Heart right ventricle (tissue), 16 donors: ENCODE measurements at regions of chr16 and their contacts with region 1.

Region 1: DNA sequence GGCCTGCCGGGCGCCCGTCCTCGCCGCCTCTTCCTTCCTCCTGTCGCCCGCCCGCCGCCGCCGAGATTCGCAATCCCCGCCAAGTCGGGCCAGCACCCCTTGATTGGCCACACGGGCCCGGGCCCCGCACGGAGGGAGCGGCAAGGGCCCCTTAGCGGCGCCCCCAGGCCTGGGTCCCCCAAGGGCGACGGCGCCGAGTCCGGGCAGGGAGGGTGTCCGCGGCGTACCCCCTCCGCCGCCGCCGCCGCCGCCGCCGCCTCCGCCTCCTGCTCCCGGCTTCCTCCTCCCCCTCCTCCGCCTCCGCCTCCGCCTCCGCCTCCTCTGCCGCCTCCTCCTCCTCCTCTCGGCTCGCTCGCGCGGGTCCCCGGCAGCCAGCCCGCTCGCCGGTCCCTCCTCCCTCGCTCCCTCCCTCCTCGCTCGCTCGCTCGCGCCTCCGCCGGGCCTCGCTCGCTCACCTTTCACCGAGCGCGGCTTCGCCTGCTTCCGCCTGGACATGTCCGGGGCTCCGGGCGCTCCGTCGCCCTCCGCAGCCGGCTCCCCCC is 561 bp downstream of the ZNF423 start:
- DNase-seq: peak; percentile 90 to 92
- ATAC-seq: peak; percentile 56 to 83 (median 72)
- H3K4me3 ChIP-seq: peak overlapping the region; percentile 40 to 84 (median 70)
- H3K27ac ChIP-seq: peak overlapping the region; percentile 85 to 99 (median 93)
- H3K4me1 ChIP-seq: peaks cover 0 to 64% (median 51%) of the 10 kb centered on the region in 9 donors
- H3K27me3 ChIP-seq: peaks cover 0 to 64% (median 0%) of the 10 kb centered on the region in 7 donors
- CTCF ChIP-seq: no peak

Region 2: GRCh38 chr16:49608779-49609178 is 246.6 kb before region 1 on chr16:
- intact Hi-C with region 1: loop called in 7 of 10 experiments (anchors 5 to 10 kb)
- DNase-seq: peak in 1 of 2 donors; percentile 41
- ATAC-seq: peak; percentile 42 to 94 (median 86)
- H3K4me3 ChIP-seq: no peak overlapping the region
- H3K27ac ChIP-seq: no peak overlapping the region
- H3K4me1 ChIP-seq: peaks cover 0 to 6% (median 0%) of the 10 kb centered on the region in 9 donors
- H3K27me3 ChIP-seq: no peaks in the 10 kb centered on the region
- CTCF ChIP-seq: peak in 8 of 9 donors; percentile 41 to 72 (median 62)

Region 3: DNA sequence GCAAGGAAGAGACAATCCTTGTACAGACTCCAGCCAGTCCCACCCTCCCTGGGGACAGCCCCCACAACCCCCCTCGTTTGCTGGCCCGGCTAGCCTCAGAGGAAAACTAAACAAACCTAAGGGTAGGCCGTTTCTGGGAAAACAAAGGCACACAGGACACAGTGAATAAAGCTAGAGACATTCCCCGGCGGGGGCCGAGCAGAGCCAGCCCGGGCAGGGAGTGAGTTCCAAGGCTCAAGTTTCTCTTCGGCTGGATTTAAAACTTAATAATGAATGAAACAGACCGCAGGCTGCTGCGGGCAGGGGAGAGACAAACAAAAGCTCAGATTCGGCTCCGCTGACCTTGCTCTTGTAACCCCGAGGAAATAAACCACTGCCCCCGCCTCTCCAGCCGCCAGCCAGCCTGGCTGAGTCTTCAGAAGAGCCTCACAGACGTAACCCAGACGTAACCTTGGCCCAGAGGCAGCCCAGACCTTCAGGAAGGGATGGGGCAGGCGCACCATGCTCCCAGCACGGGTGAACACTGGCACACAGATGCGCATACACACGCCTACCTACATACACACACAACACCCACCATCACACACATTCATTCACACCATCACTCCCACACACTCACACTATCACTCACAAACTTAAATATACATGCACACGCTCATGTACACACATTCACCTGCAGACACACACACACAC is 215.5 kb before region 1 on chr16:
- intact Hi-C with region 1: loop called in 1 of 10 experiments (anchors 10 kb)
- DNase-seq: peak; percentile 75 to 76
- ATAC-seq: peak; percentile 52 to 85 (median 76)
- H3K4me3 ChIP-seq: peak overlapping the region in 2 of 10 donors; percentile 0 to 14
- H3K27ac ChIP-seq: peak overlapping the region in 9 of 10 donors; percentile 39 to 79 (median 66)
- H3K4me1 ChIP-seq: peaks cover 11 to 55% (median 40%) of the 10 kb centered on the region in 9 donors
- H3K27me3 ChIP-seq: no peaks in the 10 kb centered on the region
- CTCF ChIP-seq: no peak

Region 4: DNA sequence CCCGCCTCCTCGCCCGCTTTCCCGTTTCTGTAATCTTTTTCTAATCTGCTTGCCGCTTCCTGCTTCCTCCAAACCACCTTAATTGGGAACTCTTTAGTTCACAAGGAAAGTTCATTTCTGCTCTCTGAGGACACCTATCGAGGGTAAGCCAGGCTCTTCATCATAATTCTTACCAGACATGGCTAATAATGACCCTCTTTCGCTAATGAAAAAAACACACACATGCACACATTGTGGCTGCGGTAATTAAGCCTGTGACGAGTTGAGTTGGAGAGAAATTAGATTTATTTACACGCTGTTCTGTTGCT is 100.1 kb before region 1 on chr16:
- intact Hi-C with region 1: loop called in 5 of 10 experiments (anchors 2 to 10 kb)
- DNase-seq: peak in 1 of 2 donors; percentile 30
- ATAC-seq: peak; percentile 51 to 89 (median 77)
- H3K4me3 ChIP-seq: peak overlapping the region in 9 of 10 donors; percentile 30 to 56 (median 44)
- H3K27ac ChIP-seq: peak overlapping the region; percentile 43 to 90 (median 84)
- H3K4me1 ChIP-seq: peaks cover 2 to 51% (median 40%) of the 10 kb centered on the region in 9 donors
- H3K27me3 ChIP-seq: peaks cover 0 to 13% (median 0%) of the 10 kb centered on the region in 7 donors
- CTCF ChIP-seq: peak; percentile 20 to 74 (median 51)

Region 5: DNA sequence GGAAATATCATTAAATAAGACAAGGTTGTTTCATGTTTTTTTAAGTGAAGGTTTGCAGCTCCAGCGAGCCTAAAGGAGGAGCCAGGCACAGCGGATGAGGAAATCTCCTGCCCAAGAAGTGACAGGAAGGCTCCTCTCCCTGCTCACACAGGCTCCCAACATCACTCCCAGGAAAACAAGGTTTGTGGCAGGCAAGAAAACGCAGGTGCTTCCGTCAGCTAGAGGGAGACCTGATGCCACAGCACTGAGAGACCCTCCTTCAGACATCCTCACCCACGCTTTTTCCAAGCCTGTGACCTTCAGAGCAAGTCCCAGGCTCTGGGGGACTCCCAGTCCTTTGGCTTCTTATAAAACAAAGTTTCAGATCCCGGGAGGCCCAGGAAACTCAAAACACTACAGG is 89.1 kb before region 1 on chr16:
- intact Hi-C with region 1: no loop called
- DNase-seq: no peak
- ATAC-seq: peak in 4 of 8 donors; percentile 24 to 42 (median 36)
- H3K4me3 ChIP-seq: no peak overlapping the region
- H3K27ac ChIP-seq: peak overlapping the region in 3 of 10 donors; percentile 19 to 72 (median 56)
- H3K4me1 ChIP-seq: peaks cover 0 to 15% (median 10%) of the 10 kb centered on the region in 9 donors
- H3K27me3 ChIP-seq: no peaks in the 10 kb centered on the region
- CTCF ChIP-seq: no peak

Region 6: DNA sequence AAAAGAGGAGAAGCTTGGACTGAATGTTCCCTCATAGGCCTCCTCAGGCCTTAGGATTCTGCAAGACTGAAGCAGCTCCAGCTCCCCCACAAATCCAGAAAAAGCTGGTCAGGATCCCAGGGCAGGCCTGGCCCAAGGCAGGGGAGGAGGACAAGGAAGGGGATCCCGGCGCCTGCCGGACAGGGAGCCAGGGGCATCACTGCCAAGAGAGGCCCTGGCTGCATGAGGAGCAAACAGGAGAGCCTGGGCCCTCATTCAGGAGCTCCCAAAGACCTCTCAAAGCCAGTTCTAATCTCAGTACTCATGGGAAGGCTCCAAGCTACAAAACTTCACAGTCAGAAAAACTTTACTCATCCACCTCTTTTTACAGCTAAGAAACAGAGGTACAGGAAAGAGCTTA is 66.8 kb before region 1 on chr16:
- intact Hi-C with region 1: no loop called
- DNase-seq: peak in 1 of 2 donors; percentile 33
- ATAC-seq: peak in 6 of 8 donors; percentile 19 to 74 (median 60)
- H3K4me3 ChIP-seq: no peak overlapping the region
- H3K27ac ChIP-seq: peak overlapping the region in 7 of 10 donors; percentile 14 to 56 (median 20)
- H3K4me1 ChIP-seq: peaks cover 0 to 33% (median 4%) of the 10 kb centered on the region in 9 donors
- H3K27me3 ChIP-seq: no peaks in the 10 kb centered on the region
- CTCF ChIP-seq: no peak

Region 7: GRCh38 chr16:49821614-49822282 is 33.6 kb before region 1 on chr16:
- intact Hi-C with region 1: no loop called
- DNase-seq: no peak
- ATAC-seq: no peak
- H3K4me3 ChIP-seq: no peak overlapping the region
- H3K27ac ChIP-seq: no peak overlapping the region
- H3K4me1 ChIP-seq: peaks cover 8 to 49% (median 25%) of the 10 kb centered on the region in 9 donors
- H3K27me3 ChIP-seq: no peaks in the 10 kb centered on the region
- CTCF ChIP-seq: no peak

Region 8: GRCh38 chr16:49834531-49835151 is 20.7 kb before region 1 on chr16:
- intact Hi-C with region 1: loop called in 2 of 10 experiments (anchors 2 kb)
- DNase-seq: peak; percentile 64 to 80
- ATAC-seq: peak; percentile 29 to 84 (median 48)
- H3K4me3 ChIP-seq: peak overlapping the region in 2 of 10 donors; percentile 8 to 23
- H3K27ac ChIP-seq: peak overlapping the region; percentile 62 to 91 (median 83)
- H3K4me1 ChIP-seq: peaks cover 48 to 82% (median 70%) of the 10 kb centered on the region in 9 donors
- H3K27me3 ChIP-seq: peaks cover 0 to 15% (median 0%) of the 10 kb centered on the region in 7 donors
- CTCF ChIP-seq: no peak

Region 9: GRCh38 chr16:51464996-51465395 is 1609.6 kb after region 1 on chr16:
- intact Hi-C with region 1: no loop called
- DNase-seq: no peak
- ATAC-seq: no peak
- H3K4me3 ChIP-seq: no peak overlapping the region
- H3K27ac ChIP-seq: no peak overlapping the region
- H3K4me1 ChIP-seq: no peaks in the 10 kb centered on the region
- H3K27me3 ChIP-seq: no peaks in the 10 kb centered on the region
- CTCF ChIP-seq: no peak